AG04449 (cell line): ENCODE measurements at regions of chr11 and their contacts with region 1.

Region 1: DNA sequence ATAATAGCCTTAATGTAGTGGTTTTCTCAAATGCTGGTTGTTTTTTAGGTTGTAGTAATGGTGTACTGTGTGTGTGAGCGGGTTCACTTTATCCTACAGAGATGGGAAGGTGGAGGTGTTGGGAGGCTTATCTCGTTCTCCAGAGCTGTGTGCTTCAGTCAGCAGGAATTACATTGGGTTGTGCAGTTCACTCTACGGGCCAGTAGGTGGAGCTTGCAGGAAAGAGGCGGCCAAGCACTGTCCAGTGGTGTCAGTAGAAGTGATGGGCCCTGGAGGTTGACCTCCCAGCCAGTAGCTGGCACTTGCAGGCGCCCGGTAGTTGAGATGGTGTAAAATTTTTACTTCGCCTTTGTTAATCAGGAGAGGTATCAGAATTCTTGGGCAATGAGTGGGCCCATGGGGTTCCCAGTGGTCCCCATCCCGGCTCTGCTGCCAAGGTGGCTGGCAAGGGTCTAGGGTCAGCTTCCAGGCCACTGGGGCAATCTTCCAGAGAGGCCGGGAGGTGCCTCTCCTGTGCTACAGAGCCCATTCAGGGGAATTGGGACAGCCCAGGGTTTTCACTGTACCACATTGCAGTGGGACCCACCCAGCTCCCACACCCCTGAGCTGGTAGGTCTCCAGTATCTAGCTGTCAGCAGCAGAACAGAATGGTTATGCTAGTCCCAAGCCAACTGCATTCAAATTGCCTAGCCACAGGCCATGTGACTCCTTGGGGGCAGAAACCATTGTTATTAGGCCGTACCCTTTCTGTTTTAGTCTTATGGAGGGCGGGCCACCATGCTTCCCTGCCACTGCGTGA is 43.9 kb downstream of the BIRC2 start:
- DNase-seq: no peak
- H3K4me3 ChIP-seq: no peak overlapping the region
- CTCF ChIP-seq: peak; percentile 87

Region 2: GRCh38 chr11:101341593-101341992 is 1049.3 kb before region 1 on chr11:
- CTCF ChIA-PET with region 1: no interaction called
- POLR2A ChIA-PET with region 1: no interaction called
- DNase-seq: no peak
- H3K4me3 ChIP-seq: no peak overlapping the region
- CTCF ChIP-seq: no peak

Region 3: DNA sequence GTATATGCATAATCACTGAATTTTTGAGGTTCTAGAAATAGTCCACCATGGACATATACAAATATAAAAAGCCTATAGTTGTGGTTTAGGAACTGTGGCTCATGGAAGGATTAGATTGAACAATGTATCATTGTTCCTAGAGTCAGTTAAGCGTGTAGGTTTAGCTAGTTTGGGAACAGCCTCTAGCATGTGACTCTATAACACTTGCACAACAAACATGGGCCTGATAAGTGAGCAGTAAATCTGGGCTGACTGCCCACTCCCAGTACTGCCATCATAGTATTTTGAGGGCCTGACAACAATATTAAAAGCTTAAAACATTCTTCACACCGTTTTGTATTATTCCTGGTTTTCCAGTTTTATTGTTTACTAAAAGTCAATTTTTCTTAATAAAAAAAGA is 233.6 kb before region 1 on chr11:
- CTCF ChIA-PET with region 1: no interaction called
- POLR2A ChIA-PET with region 1: no interaction called
- DNase-seq: no peak
- H3K4me3 ChIP-seq: no peak overlapping the region
- CTCF ChIP-seq: no peak

Region 4: DNA sequence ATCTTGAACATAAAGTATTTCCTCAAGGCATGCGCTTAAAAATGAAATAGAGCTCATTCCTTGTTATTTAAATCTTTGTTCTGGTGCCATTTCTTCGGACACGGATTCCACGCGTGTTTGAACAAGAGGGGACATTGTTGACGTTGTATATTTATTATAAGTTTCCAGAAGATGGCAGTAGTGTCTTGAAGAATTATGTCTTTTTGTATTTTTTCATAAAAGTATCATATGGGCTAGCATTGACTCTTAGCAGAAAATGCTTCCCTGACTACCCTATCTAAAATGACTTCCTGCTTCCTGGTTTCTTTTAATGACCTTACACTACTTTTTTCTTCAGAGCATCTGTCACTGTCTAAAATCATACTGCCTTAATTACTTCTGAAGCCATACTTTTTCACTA is 23.5 kb before region 1 on chr11:
- CTCF ChIA-PET with region 1: interaction called, 40 read pairs
- POLR2A ChIA-PET with region 1: no interaction called
- DNase-seq: no peak
- H3K4me3 ChIP-seq: no peak overlapping the region
- CTCF ChIP-seq: no peak

Region 5: DNA sequence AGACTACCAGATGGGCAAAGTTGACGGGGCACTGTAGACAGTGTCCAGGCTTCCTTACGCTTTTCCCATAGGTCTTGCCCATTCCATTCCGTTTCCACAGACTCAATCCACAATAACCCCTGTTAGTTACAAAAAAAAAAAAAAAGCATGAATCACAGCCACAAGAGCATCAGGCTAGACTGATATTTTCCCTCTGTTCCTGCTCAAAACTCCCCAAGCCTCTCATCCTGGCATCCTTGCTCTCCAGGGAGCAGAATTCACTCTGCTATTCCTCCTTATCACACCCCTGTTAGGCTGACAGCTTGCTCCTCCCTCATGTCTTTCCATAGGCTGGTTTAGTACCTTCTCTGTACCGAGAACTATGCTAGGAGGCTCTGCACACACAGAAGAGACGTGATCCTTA is 19.5 kb after region 1 on chr11:
- CTCF ChIA-PET with region 1: interaction called, 39 read pairs
- POLR2A ChIA-PET with region 1: no interaction called
- DNase-seq: no peak
- H3K4me3 ChIP-seq: no peak overlapping the region
- CTCF ChIP-seq: no peak

Region 6: DNA sequence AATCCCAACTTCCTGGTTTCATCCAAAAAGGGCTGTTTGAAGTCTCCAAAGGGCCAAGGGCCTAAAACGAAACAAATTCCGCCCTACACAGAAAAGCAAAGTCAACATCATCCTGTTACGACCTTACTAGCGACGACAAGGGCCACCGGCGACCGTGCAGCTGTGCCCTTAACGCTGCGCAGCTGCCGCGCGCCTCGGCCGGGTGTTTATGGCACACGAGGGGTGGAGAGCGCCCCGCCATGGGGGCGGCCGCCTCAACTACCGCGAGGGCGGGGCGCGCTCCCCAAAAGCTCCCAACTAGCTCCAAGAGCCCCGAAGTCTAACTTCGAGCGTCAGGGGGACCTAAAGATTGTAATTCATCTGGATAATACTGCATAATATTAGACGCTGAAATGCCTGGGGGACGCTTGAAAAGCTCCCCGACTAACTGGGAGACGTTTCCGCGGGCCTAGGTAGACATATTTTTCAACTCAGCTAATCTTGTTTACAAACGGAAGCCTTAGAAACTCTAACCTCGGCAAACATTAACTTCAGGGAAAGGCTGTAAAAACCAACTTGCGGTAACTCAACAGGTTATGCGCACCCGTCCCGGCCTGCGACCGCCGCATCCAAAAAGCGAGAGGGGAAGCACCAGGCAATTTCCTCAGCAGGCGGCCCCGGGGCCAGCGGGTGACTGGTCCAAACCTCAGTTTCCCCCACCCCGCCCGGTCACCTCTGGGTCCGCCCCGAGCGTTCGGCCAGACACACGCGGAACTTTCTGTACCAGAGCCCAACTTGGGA is 61.0 kb after region 1 on chr11:
- CTCF ChIA-PET with region 1: interaction called, 13 read pairs
- POLR2A ChIA-PET with region 1: no interaction called
- DNase-seq: no peak
- H3K4me3 ChIP-seq: peak overlapping the region; percentile 89
- CTCF ChIP-seq: no peak

Region 7: DNA sequence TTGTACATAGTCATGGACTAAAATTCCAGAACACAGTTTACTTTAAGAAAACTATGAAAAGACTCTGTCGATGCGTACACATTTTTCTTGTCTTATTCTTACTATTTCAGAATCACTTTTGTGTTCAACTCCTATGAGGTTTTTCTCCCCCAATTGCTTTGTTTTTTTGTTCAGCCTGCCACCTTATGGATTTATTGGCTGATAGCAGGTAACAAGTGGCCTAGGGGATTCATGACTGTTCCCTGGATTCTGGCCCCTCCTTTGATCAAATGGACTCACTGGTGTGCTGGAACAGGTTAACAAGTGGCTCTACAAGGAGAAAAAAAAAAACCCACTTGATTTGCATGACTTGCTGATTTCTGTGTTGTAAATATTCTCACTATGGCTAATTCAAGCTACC is 223.6 kb after region 1 on chr11:
- CTCF ChIA-PET with region 1: interaction called, 63 read pairs
- POLR2A ChIA-PET with region 1: no interaction called
- DNase-seq: no peak
- H3K4me3 ChIP-seq: no peak overlapping the region
- CTCF ChIP-seq: no peak

Region 8: GRCh38 chr11:103055221-103055890 is 664.5 kb after region 1 on chr11:
- CTCF ChIA-PET with region 1: no interaction called
- POLR2A ChIA-PET with region 1: no interaction called
- DNase-seq: no peak
- H3K4me3 ChIP-seq: no peak overlapping the region
- CTCF ChIP-seq: peak; percentile 43